PC-3 (cell line): ENCODE measurements at regions of chr13 and their contacts with region 1.

Region 1: DNA sequence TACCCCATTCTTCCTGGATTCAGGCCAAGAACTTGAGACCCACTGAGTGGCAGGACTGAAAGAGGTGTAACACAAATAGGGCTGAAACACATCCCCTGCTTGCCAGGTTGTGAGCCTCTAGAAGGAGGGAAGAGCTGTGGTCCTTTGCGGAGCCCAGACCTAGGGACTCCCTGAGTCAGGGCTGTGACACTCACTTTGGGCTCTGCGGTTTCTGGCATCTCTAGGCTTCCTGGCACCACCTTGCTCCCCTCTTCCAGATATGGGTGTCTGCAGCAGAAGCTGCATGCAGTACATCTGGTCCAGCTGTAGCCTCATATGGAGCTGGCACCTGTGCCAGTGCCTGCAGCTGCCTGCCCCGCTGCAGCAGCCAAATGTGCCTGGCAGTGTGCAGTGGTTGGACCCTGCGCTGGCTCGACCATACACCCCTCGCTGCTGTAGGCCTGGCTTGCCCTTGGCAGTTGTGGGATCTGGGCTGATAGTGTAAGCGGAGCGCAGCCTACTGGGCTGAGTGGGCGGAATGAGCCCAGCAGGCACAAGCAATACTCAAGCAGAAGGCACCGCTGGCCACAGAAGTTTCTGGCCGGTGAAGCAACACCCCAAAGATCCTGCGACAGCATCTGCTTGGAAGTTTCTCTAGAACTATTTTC is 290.4 kb downstream of the SLITRK6 start:
- DNase-seq: no peak
- ATAC-seq: peak; percentile 31
- H3K4me3 ChIP-seq: no peak overlapping the region
- H3K27ac ChIP-seq: peak overlapping the region; percentile 61
- H3K4me1 ChIP-seq: peaks cover 47% of the 10 kb centered on the region
- H3K27me3 ChIP-seq: no peaks in the 10 kb centered on the region
- CTCF ChIP-seq: no peak; the same call in 1 of the 2 replicates

Region 2: GRCh38 chr13:84925443-84925842 is 583.4 kb before region 1 on chr13:
- CTCF ChIA-PET with region 1: no interaction called
- POLR2A ChIA-PET with region 1: no interaction called
- intact Hi-C with region 1: loop called (anchors 10 kb)
- DNase-seq: peak; percentile 73
- ATAC-seq: peak; percentile 94
- H3K4me3 ChIP-seq: no peak overlapping the region
- H3K27ac ChIP-seq: 0 out of 2 replicates have a peak overlapping the region, but pooled peaks have one; percentile 10
- H3K4me1 ChIP-seq: peaks cover 13% of the 10 kb centered on the region
- H3K27me3 ChIP-seq: no peaks in the 10 kb centered on the region
- CTCF ChIP-seq: no peak

Region 3: DNA sequence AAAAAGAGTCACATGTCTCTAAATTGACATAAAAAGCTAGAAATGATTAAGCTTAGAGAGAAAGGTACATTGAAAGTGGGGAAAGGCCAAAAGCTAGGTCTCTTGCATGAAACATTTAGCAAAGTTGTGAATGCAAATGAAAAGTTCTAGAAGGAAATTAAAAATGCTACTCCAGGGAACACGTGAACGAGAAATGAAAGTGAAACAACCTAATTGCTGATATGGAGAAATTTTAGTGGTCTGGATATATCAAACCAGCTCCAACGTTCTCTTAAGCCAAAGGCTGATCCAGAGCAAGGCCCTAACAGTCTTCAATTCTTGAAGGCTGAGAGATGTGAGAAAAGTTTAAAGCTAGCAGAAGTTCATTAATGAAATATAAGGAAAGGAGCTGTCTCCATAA is 129.4 kb before region 1 on chr13:
- CTCF ChIA-PET with region 1: no interaction called
- POLR2A ChIA-PET with region 1: no interaction called
- intact Hi-C with region 1: loop called (anchors 10 kb)
- DNase-seq: no peak
- ATAC-seq: no peak
- H3K4me3 ChIP-seq: no peak overlapping the region
- H3K27ac ChIP-seq: no peak overlapping the region
- H3K4me1 ChIP-seq: peaks cover 18% of the 10 kb centered on the region
- H3K27me3 ChIP-seq: no peaks in the 10 kb centered on the region
- CTCF ChIP-seq: no peak

Region 4: DNA sequence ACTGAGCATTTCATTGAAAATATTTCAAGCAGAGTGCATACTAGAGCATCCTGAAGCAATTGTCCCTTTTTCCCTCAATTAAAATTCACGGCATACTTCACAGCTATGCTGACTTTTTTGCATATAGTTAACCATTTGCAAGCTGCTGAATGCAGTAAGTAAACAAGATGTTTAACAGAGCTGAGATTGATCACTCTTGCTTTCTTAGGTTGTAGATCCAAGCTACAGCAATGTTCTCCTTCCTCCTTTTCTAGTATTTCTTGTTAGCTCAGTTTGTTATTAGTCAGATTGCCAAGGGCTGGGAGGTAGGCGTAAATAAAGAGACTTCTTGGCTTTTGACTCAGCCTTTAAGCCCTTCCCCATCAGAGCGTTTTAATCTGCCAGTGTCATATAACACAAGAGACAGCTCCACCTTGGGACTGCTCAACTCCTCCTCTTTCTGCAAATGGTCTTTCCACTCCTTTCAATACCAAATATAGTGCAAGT is 290.3 kb after region 1 on chr13 and contains the start of gene SLITRK6:
- CTCF ChIA-PET with region 1: no interaction called
- POLR2A ChIA-PET with region 1: no interaction called
- intact Hi-C with region 1: loop called (anchors 5 kb)
- DNase-seq: peak; percentile 93
- ATAC-seq: peak; percentile 100
- H3K4me3 ChIP-seq: peak within 1 kb of the TSS; percentile 71
- H3K27ac ChIP-seq: peak within 1 kb of the TSS; percentile 46
- H3K4me1 ChIP-seq: peaks cover 15% of the 10 kb centered on the region
- H3K27me3 ChIP-seq: no peaks in the 10 kb centered on the region
- CTCF ChIP-seq: peak; percentile 50
- total RNA-seq, gene SLITRK6: 4.1 and 4.6 TPM in 2 replicates

Region 5: GRCh38 chr13:86020351-86021002 is 511.7 kb after region 1 on chr13:
- CTCF ChIA-PET with region 1: no interaction called
- POLR2A ChIA-PET with region 1: no interaction called
- intact Hi-C with region 1: no loop called
- DNase-seq: peak; percentile 25
- ATAC-seq: no peak
- H3K4me3 ChIP-seq: no peak overlapping the region
- H3K27ac ChIP-seq: no peak overlapping the region
- H3K4me1 ChIP-seq: no peaks in the 10 kb centered on the region
- H3K27me3 ChIP-seq: no peaks in the 10 kb centered on the region
- CTCF ChIP-seq: no peak